ENCODE measurements at regions of chr4 and their contacts with region 1.

Region 1: GRCh38 chr4:4995103-4995907 is 24.0 kb downstream of the CYTL1 start:
- DNase-seq: peak; percentile 80
- ATAC-seq: peak; percentile 19 to 67

Region 2: DNA sequence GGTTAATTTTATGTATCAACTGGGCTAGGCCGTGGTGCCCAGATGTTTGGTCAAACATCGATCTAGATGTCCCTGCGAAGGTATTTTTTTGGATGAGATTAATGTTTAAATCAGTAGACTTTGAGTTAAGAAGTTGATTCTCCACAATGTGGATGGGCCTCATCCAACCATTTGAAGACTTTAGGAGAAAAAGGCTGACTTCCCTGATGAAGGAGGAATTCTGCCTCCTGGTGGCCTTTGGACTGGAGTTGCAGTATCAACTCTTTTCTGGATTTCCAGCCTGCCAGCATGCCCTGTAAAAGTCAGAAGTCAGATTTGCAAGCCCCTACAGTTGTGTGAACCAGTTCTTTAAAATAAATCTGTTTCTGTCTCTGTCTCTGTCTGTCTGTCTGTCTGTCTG is 147.4 kb after region 1 on chr4:
- intact Hi-C with region 1: loop called in 1 of 2 experiments (anchors 5 kb)
- DNase-seq: no peak
- ATAC-seq: no peak

Region 3: GRCh38 chr4:5824635-5825034 is 829.3 kb after region 1 on chr4:
- intact Hi-C with region 1: loop called in 1 of 2 experiments (anchors 10 kb)
- DNase-seq: no peak
- ATAC-seq: no peak